ENCODE measurements at regions of chr5 and their contacts with region 1.

Region 1: DNA sequence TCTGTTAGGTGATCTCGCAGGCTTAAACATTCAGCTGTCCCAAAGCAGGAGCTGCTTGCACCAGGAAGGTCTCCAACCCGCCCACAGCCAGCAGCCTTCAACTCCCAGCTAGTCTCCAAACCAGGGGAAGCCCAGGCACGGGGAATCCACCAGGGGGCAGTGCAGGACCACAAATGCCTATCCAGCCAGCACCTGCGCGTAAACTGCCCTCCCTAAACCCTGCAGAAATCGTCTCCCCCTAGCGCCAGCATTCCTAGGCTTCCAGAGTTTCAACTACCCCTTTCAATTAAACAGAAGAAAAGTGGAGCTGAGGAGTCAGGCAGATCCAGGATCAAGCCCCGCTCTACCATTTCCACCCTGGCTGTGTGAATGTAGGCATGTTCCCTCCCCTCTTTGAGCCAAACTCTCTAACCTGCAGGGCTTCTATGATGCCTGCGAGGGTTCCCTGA is 72.0 kb downstream of the HRH2 start:
- DNase-seq: peak; percentile 93 to 96
- ATAC-seq: peak; percentile 95 to 98
- H3K4me3 ChIP-seq: no peak overlapping the region
- H3K27ac ChIP-seq: peak overlapping the region; percentile 77 to 78
- H3K4me1 ChIP-seq: peaks cover 24% of the 10 kb centered on the region
- CTCF ChIP-seq: peak; percentile 99
- EP300 ChIP-seq: no peak
- POLR2A ChIP-seq: no peak
- RAD21 ChIP-seq: peak; percentile 100

Region 2: DNA sequence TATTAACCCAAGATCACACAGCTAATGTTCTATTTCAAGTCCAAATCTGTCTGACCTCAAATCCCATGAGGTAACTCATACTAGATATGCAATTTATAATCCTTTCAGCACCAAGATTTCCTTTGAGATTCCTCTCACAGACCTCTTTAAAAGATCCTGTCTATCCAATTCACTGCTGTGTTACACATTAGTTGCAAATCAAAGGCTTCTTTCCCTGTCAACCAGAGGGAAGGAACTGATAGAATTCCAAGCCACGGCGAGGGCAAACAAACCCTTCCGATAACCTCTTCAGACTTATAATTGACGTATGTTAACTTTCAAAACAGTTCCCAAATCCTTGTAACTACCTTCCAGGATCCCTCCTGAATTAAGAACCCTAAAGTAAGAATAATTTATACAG is 454.8 kb before region 1 on chr5:
- CTCF ChIA-PET with region 1: no interaction called
- POLR2A ChIA-PET with region 1: no interaction called
- DNase-seq: no peak
- ATAC-seq: no peak
- H3K4me3 ChIP-seq: no peak overlapping the region
- H3K27ac ChIP-seq: no peak overlapping the region
- H3K4me1 ChIP-seq: no peaks in the 10 kb centered on the region
- CTCF ChIP-seq: no peak
- EP300 ChIP-seq: no peak
- POLR2A ChIP-seq: no peak
- RAD21 ChIP-seq: no peak

Region 3: DNA sequence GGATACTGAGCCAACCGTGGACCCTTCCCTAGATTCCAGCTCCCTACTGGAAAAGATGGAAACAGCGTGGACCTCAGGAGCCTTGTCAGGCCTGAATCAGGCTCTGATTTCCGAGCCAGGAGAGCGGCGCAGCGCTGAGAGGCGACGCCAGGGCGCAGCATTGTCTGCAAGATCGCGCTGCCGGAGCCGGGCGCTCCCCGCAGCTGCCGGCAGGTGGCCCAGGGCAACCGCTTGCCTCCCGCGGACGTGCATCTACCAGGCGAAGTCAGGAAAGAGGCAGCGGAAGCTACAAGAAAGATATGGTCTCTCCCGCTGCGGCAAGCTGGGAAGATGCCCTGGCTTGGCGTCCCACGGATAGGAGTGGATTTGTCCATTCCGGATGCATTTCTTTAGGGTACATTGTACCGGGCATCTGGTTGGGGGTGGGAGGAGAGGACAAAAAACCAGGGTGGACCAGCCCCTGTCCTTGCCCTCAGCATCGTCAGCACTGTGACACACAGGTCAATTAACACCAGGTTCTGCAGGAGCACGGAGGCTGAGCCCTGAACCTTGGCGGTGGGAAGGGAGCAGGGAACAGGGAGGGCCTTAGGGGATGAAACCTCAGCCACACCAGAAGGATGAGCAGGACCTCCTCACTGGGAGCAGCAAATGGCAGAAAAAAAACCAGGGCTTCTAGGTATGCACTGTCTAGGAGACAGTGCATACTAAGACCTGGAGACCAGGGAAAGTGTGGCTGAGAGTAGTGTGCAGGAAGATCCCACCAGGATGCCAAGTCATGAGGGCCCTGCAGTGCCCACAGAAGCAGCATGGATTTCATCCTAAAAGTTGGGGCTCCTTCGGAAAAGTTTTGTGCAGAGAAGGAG is 195.6 kb before region 1 on chr5:
- CTCF ChIA-PET with region 1: interaction called, 67 read pairs
- POLR2A ChIA-PET with region 1: no interaction called
- DNase-seq: peak; percentile 80 to 83
- ATAC-seq: peak; percentile 95 to 99
- H3K4me3 ChIP-seq: no peak overlapping the region
- H3K27ac ChIP-seq: no peak overlapping the region
- H3K4me1 ChIP-seq: peaks cover 3% of the 10 kb centered on the region; the same call in 1 of the 3 replicates
- CTCF ChIP-seq: peak; percentile 98
- EP300 ChIP-seq: no peak
- POLR2A ChIP-seq: no peak
- RAD21 ChIP-seq: peak; percentile 92 to 98

Region 4: DNA sequence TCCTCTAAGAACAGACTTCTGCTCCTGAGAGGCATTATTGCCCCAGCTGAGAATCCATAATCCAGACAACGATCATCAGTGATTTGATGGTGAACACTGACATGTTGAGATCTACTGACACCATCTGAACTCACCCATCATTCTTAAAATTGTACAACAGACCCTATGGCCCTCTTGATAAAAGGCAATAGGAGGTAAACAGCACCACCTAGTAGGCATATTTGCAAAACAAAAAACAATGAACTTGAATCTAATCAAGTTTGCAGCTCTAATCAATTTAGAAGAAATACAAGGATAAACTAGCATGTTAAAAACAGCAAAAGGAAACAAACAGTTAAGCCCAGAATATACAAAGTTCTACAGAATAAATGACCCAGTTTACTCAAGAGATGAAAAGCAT is 161.9 kb before region 1 on chr5:
- CTCF ChIA-PET with region 1: no interaction called
- POLR2A ChIA-PET with region 1: no interaction called
- DNase-seq: no peak
- ATAC-seq: no peak
- H3K4me3 ChIP-seq: no peak overlapping the region
- H3K27ac ChIP-seq: no peak overlapping the region
- H3K4me1 ChIP-seq: no peaks in the 10 kb centered on the region
- CTCF ChIP-seq: peak; percentile 20; the same call in 1 of the 3 replicates
- EP300 ChIP-seq: no peak
- POLR2A ChIP-seq: no peak
- RAD21 ChIP-seq: peak in 1 of 2 experiments; percentile 48; a peak in 3 of 5 replicates

Region 5: GRCh38 chr5:175746851-175747250 is 17.0 kb after region 1 on chr5:
- CTCF ChIA-PET with region 1: interaction called, 68 read pairs
- POLR2A ChIA-PET with region 1: no interaction called
- DNase-seq: peak; percentile 58 to 60
- ATAC-seq: peak; percentile 80 to 91
- H3K4me3 ChIP-seq: no peak overlapping the region
- H3K27ac ChIP-seq: peak overlapping the region; percentile 29 to 76; a peak in 3 of 6 replicates
- H3K4me1 ChIP-seq: peaks cover 32% of the 10 kb centered on the region
- CTCF ChIP-seq: no peak
- EP300 ChIP-seq: no peak
- POLR2A ChIP-seq: no peak
- RAD21 ChIP-seq: no peak

Region 6: GRCh38 chr5:175796536-175797499 is 67.0 kb after region 1 on chr5:
- CTCF ChIA-PET with region 1: interaction called, 47 read pairs
- POLR2A ChIA-PET with region 1: no interaction called
- DNase-seq: peak; percentile 66 to 74
- ATAC-seq: peak; percentile 94 to 97
- H3K4me3 ChIP-seq: peak overlapping the region; percentile 53
- H3K27ac ChIP-seq: peak overlapping the region; percentile 65 to 80
- H3K4me1 ChIP-seq: peaks cover 38% of the 10 kb centered on the region
- CTCF ChIP-seq: no peak; the same call in 2 of the 3 replicates
- EP300 ChIP-seq: no peak
- POLR2A ChIP-seq: no peak
- RAD21 ChIP-seq: peak; percentile 8 to 54; a peak in 4 of 5 replicates

Region 7: DNA sequence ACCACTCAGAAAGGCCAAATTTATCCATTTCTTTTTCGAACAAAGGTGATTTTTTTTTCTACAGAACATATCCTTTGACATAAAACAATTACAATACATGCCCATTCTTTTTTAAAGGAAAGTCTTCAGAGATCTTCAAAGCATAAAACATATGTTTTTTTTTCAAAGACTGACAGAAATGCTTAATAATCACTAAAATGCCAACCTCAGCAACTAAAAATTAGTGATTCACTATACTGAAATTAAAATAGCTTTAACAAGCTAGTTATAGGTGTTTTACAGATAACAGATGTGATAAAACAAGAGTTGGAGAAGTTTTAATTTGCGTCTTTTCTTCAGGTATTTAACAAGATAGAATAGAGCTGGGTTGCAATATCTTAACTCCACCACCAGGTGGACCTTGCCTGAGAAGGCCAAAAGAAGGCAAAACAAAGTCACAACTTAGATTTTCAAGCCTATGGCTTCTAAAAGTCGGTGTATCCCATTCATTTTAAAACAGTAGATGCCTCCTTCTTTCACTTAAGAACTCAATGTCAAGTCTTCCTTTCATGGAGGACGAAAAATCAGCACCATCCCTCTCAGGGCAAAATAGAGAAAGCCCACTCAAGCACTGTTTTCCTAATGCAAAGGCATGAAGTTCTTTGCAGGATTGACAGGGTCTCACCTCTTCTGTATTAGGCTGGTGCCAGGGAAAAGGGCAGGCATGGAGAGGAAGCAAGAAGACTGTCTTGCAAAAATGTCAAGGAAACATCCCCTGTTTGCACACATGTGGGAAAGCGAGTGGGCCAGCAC is 110.4 kb after region 1 on chr5:
- CTCF ChIA-PET with region 1: interaction called, 24 read pairs
- POLR2A ChIA-PET with region 1: no interaction called
- DNase-seq: peak in 1 of 2 experiments; percentile 64
- ATAC-seq: no peak
- H3K4me3 ChIP-seq: no peak overlapping the region
- H3K27ac ChIP-seq: peak overlapping the region; percentile 97 to 99
- H3K4me1 ChIP-seq: peaks cover 64% of the 10 kb centered on the region
- CTCF ChIP-seq: peak; percentile 43; the same call in 2 of the 3 replicates
- EP300 ChIP-seq: no peak
- POLR2A ChIP-seq: no peak
- RAD21 ChIP-seq: peak; percentile 21 to 40; a peak in 1 of 5 replicates

Region 8: GRCh38 chr5:175895215-175896102 is 165.6 kb after region 1 on chr5:
- CTCF ChIA-PET with region 1: interaction called, 51 read pairs
- POLR2A ChIA-PET with region 1: no interaction called
- DNase-seq: no peak
- ATAC-seq: no peak
- H3K4me3 ChIP-seq: no peak overlapping the region
- H3K27ac ChIP-seq: peak overlapping the region in 1 of 2 experiments; percentile 48; a peak in 1 of 6 replicates
- H3K4me1 ChIP-seq: peaks cover 8% of the 10 kb centered on the region
- CTCF ChIP-seq: no peak
- EP300 ChIP-seq: no peak
- POLR2A ChIP-seq: no peak
- RAD21 ChIP-seq: no peak

Region 9: GRCh38 chr5:176144508-176144907 is 414.7 kb after region 1 on chr5:
- CTCF ChIA-PET with region 1: no interaction called
- POLR2A ChIA-PET with region 1: no interaction called
- DNase-seq: no peak
- ATAC-seq: no peak
- H3K4me3 ChIP-seq: no peak overlapping the region
- H3K27ac ChIP-seq: no peak overlapping the region
- H3K4me1 ChIP-seq: no peaks in the 10 kb centered on the region
- CTCF ChIP-seq: no peak
- EP300 ChIP-seq: no peak
- POLR2A ChIP-seq: no peak
- RAD21 ChIP-seq: no peak

Measured in A549 (cell line).